ENCODE measurements at regions of chr19 and their contacts with region 1.

Region 1: DNA sequence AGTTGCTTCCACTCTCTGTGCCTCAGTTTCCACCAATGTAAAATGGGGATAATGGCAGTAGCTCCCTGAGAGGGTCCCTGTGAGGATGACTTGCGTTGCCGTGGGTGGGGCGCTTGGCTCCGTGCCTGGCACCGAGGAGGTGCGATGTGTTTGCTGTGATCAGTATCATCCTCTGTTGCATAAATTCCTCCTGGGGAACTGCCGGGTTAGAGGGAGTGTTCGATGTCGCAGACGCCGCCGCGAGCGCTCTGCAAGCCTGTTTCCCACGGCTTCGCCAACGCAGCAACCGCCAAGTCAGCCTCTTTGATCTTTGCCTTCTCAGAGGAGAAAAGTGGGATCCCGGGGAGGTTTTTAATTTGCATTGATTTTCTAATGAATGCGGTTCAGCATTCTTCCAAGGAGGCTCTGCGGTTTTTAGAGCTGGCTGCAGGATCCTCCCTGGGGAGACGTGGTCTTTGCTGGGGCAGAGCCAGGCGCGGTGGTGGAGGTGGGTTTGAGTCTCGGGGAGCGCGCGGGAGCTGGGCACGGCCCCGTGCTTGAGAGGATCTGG is 7.6 kb downstream of the GPR32 start:
- DNase-seq: no peak
- ATAC-seq: no peak
- H3K4me3 ChIP-seq: no peak overlapping the region
- H3K4me3 Mint-ChIP-seq: no peak overlapping the region
- H3K27ac ChIP-seq: no peak overlapping the region
- H3K27ac Mint-ChIP-seq: no peak overlapping the region
- H3K4me1 ChIP-seq: no peaks in the 10 kb centered on the region
- H3K4me1 Mint-ChIP-seq: peaks cover 2 to 14% (median 6%) of the 10 kb centered on the region in 7 donors
- H3K27me3 ChIP-seq: peaks cover 0 to 17% of the 10 kb centered on the region in 2 donors
- H3K27me3 Mint-ChIP-seq: peaks cover 55 to 85% (median 79%) of the 10 kb centered on the region in 5 donors

Region 2: GRCh38 chr19:50147462-50148423 is 630.1 kb before region 1 on chr19:
- CTCF ChIA-PET with region 1: interaction called, 3 read pairs
- POLR2A ChIA-PET with region 1: no interaction called
- intact Hi-C with region 1: loop called in 1 of 2 experiments (anchors 1 kb)
- DNase-seq: peak; percentile 37 to 80 (median 72)
- ATAC-seq: peak; percentile 91
- H3K4me3 ChIP-seq: peak overlapping the region; percentile 63
- H3K4me3 Mint-ChIP-seq: peak overlapping the region; percentile 74 to 97 (median 87)
- H3K27ac ChIP-seq: peak overlapping the region; percentile 53
- H3K27ac Mint-ChIP-seq: peak overlapping the region in 8 of 9 donors; percentile 0 to 62 (median 36)
- H3K4me1 ChIP-seq: no peaks in the 10 kb centered on the region
- H3K4me1 Mint-ChIP-seq: peaks cover 6 to 12% (median 9%) of the 10 kb centered on the region in 7 donors
- H3K27me3 ChIP-seq: peaks cover 0 to 3% of the 10 kb centered on the region in 2 donors
- H3K27me3 Mint-ChIP-seq: peaks cover 14 to 23% (median 20%) of the 10 kb centered on the region in 5 donors

Region 3: GRCh38 chr19:50230379-50231351 is 547.2 kb before region 1 on chr19:
- CTCF ChIA-PET with region 1: no interaction called
- POLR2A ChIA-PET with region 1: no interaction called
- intact Hi-C with region 1: no loop called
- DNase-seq: no peak
- ATAC-seq: no peak
- H3K4me3 ChIP-seq: no peak overlapping the region
- H3K4me3 Mint-ChIP-seq: no peak overlapping the region
- H3K27ac ChIP-seq: no peak overlapping the region
- H3K27ac Mint-ChIP-seq: no peak overlapping the region
- H3K4me1 ChIP-seq: no peaks in the 10 kb centered on the region
- H3K4me1 Mint-ChIP-seq: no peaks in the 10 kb centered on the region
- H3K27me3 ChIP-seq: no peaks in the 10 kb centered on the region
- H3K27me3 Mint-ChIP-seq: peaks cover 0 to 23% (median 9%) of the 10 kb centered on the region in 5 donors

Region 4: GRCh38 chr19:50607874-50608785 is 169.7 kb before region 1 on chr19:
- CTCF ChIA-PET with region 1: no interaction called
- POLR2A ChIA-PET with region 1: no interaction called
- intact Hi-C with region 1: loop called in 1 of 2 experiments (anchors 5 kb)
- DNase-seq: peak; percentile 21 to 79 (median 54)
- ATAC-seq: peak; percentile 78
- H3K4me3 ChIP-seq: no peak overlapping the region
- H3K4me3 Mint-ChIP-seq: peak overlapping the region in 8 of 10 donors; percentile 1 to 71 (median 48)
- H3K27ac ChIP-seq: no peak overlapping the region
- H3K27ac Mint-ChIP-seq: no peak overlapping the region
- H3K4me1 ChIP-seq: no peaks in the 10 kb centered on the region
- H3K4me1 Mint-ChIP-seq: peaks cover 4 to 25% (median 10%) of the 10 kb centered on the region in 7 donors
- H3K27me3 ChIP-seq: peaks cover 0 to 3% of the 10 kb centered on the region in 2 donors
- H3K27me3 Mint-ChIP-seq: peaks cover 5 to 48% (median 36%) of the 10 kb centered on the region in 5 donors

Region 5: GRCh38 chr19:50705422-50706019 is 72.3 kb before region 1 on chr19:
- CTCF ChIA-PET with region 1: interaction called, 3 read pairs
- POLR2A ChIA-PET with region 1: no interaction called
- intact Hi-C with region 1: loop called (anchors 1 kb)
- DNase-seq: peak in 2 of 9 donors; percentile 20 to 34
- ATAC-seq: peak; percentile 67
- H3K4me3 ChIP-seq: no peak overlapping the region
- H3K4me3 Mint-ChIP-seq: no peak overlapping the region
- H3K27ac ChIP-seq: no peak overlapping the region
- H3K27ac Mint-ChIP-seq: no peak overlapping the region
- H3K4me1 ChIP-seq: no peaks in the 10 kb centered on the region
- H3K4me1 Mint-ChIP-seq: peaks cover 0 to 2% (median 0%) of the 10 kb centered on the region in 7 donors
- H3K27me3 ChIP-seq: no peaks in the 10 kb centered on the region
- H3K27me3 Mint-ChIP-seq: peaks cover 21 to 46% (median 30%) of the 10 kb centered on the region in 5 donors

Measured in naive thymus-derived CD4-positive, alpha-beta T cell (primary cell).